ENCODE measurements at regions of chr14 and their contacts with region 1.

Region 1: DNA sequence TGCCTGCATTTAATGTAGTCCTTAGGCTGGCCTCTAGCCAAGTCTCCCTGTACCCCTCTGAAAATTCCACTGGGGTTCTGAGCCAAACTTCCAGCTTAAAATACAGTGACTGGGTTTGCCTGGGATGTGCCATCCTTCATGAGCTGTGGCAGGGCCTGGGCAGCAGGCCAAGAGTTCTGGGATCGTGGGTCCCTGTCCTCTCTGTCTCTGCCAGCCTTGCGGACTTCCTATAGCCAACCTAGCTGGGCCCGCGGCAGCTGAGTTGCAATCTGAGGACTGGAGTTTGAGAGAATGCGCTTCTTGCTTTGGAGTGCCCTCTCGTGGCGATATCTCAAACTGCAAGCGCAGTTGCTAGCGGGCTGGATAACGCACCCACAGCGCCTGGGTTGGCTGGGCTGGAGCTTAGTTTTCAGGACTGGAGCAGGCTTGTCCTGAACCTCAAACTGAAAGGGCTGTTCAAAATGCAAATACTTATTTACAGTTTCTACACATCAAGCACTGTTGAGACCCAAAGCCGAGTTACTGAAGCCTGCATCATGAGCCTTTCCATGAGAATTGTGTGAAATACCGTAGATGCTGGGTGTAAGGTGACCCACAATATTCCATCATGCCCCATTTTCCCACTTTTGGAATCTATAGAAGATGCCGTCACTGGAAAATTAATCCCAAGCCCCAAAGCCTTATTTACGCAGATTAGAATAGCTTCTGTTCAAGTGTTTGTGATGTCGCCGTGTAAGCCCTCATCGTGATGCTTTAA is 7.3 kb upstream of the IFI27L2 start:
- DNase-seq: peak; percentile 80
- ATAC-seq: peak; percentile 93
- H3K4me3 ChIP-seq: peak overlapping the region in 2 of 3 experiments; percentile 19 to 48; a peak in 3 of 6 replicates
- H3K27ac ChIP-seq: no peak overlapping the region
- H3K4me1 ChIP-seq: peaks cover 27% of the 10 kb centered on the region
- H3K27me3 ChIP-seq: peaks cover 2 to 25% of the 10 kb centered on the region in 2 experiments; a peak in 4 of 5 replicates
- CTCF ChIP-seq: peak; percentile 98
- EP300 ChIP-seq: no peak
- POLR2A ChIP-seq: no peak
- RAD21 ChIP-seq: peak; percentile 95

Region 2: GRCh38 chr14:93939304-93940229 is 197.2 kb before region 1 on chr14:
- CTCF ChIA-PET with region 1: interaction called, 4 read pairs
- POLR2A ChIA-PET with region 1: no interaction called
- in situ Hi-C with region 1: loop called (anchors 5 kb)
- intact Hi-C with region 1: no loop called
- DNase-seq: no peak
- ATAC-seq: peak; percentile 91
- H3K4me3 ChIP-seq: no peak overlapping the region
- H3K27ac ChIP-seq: no peak overlapping the region
- H3K4me1 ChIP-seq: peaks cover 25% of the 10 kb centered on the region
- H3K27me3 ChIP-seq: no peaks in the 10 kb centered on the region; a peak in 1 of 5 replicates
- CTCF ChIP-seq: peak; percentile 92
- EP300 ChIP-seq: no peak
- POLR2A ChIP-seq: no peak
- RAD21 ChIP-seq: peak; percentile 97

Region 3: GRCh38 chr14:94036313-94037050 is 100.3 kb before region 1 on chr14:
- CTCF ChIA-PET with region 1: interaction called, 11 read pairs
- POLR2A ChIA-PET with region 1: interaction called, 7 read pairs
- in situ Hi-C with region 1: loop called (anchors 5 kb)
- intact Hi-C with region 1: loop called (anchors 1 kb)
- DNase-seq: peak; percentile 73
- ATAC-seq: peak; percentile 90
- H3K4me3 ChIP-seq: no peak overlapping the region
- H3K27ac ChIP-seq: no peak overlapping the region
- H3K4me1 ChIP-seq: peaks cover 43% of the 10 kb centered on the region
- H3K27me3 ChIP-seq: no peaks in the 10 kb centered on the region
- CTCF ChIP-seq: peak; percentile 91
- EP300 ChIP-seq: no peak
- POLR2A ChIP-seq: no peak
- RAD21 ChIP-seq: peak; percentile 77

Region 4: DNA sequence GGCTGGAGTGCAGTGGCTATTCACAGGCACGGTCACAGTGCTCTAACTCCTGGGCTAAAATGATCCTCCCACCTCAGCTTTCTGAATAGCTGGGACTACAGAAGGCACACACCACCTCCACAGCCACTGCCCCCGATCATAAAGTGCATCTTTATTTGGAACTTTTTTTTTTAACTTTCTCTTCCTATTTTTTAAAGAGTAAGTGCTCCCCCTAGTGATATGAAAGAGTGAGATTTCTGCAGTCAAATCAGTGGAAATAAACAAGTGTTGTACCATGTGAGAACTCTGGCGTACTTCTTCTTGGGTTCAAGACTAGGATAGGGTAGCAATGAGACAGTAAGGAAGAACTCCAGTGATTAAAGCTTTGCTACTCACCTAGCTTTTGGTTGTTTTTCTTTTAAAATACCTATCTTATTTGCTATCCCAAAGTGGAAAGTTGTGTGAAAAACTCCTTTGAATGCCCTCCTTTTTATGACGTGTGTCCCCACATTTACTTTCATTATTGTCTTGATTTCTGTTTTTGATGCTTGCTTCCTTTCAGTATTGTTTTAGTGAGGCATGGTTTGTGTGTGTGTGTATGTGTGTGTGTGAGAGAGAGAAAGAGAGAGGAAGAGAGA is 44.0 kb after region 1 on chr14:
- CTCF ChIA-PET with region 1: interaction called, 10 read pairs
- POLR2A ChIA-PET with region 1: interaction called, 3 read pairs
- in situ Hi-C with region 1: no loop called
- intact Hi-C with region 1: loop called (anchors 1 kb)
- DNase-seq: peak; percentile 67
- ATAC-seq: peak; percentile 94
- H3K4me3 ChIP-seq: peak overlapping the region in 2 of 3 experiments; percentile 28 to 47; a peak in 2 of 6 replicates
- H3K27ac ChIP-seq: peak overlapping the region; percentile 52
- H3K4me1 ChIP-seq: peaks cover 66% of the 10 kb centered on the region
- H3K27me3 ChIP-seq: no peaks in the 10 kb centered on the region
- CTCF ChIP-seq: peak; percentile 66
- EP300 ChIP-seq: no peak
- POLR2A ChIP-seq: no peak
- RAD21 ChIP-seq: peak; percentile 38; the same call in 1 of the 2 replicates

Region 5: GRCh38 chr14:94373708-94374107 is 237.0 kb after region 1 on chr14:
- CTCF ChIA-PET with region 1: no interaction called
- POLR2A ChIA-PET with region 1: no interaction called
- in situ Hi-C with region 1: no loop called
- intact Hi-C with region 1: loop called (anchors 10 kb)
- DNase-seq: no peak
- ATAC-seq: no peak
- H3K4me3 ChIP-seq: no peak overlapping the region
- H3K27ac ChIP-seq: no peak overlapping the region
- H3K4me1 ChIP-seq: peaks cover 100% of the 10 kb centered on the region
- H3K27me3 ChIP-seq: no peaks in the 10 kb centered on the region
- CTCF ChIP-seq: no peak
- EP300 ChIP-seq: no peak
- POLR2A ChIP-seq: no peak
- RAD21 ChIP-seq: no peak